K562 (cell line): ENCODE measurements at regions of chr11 and their contacts with region 1.

Region 1: GRCh38 chr11:120335908-120336640 is at the start of gene ARHGEF12:
- DNase-seq: peak; percentile 93 to 97 (median 95)
- ATAC-seq: peak; percentile 61
- H3K4me3 ChIP-seq: peak within 1 kb of the TSS; percentile 72
- H3K27ac ChIP-seq: peak within 1 kb of the TSS; percentile 84
- H3K4me1 ChIP-seq: peaks cover 13 to 20% of the 10 kb centered on the region in 2 experiments; a peak in 3 of 5 replicates
- H3K27me3 ChIP-seq: no peaks in the 10 kb centered on the region
- CTCF ChIP-seq: peak; percentile 43 to 76 (median 54)
- EP300 ChIP-seq: peak; percentile 53
- POLR2A ChIP-seq: peak; percentile 68
- RAD21 ChIP-seq: peak; percentile 19 to 26; a peak in 3 of 4 replicates
- polyA plus RNA-seq, gene ARHGEF12: 3.5 to 4.6 TPM

Region 2: DNA sequence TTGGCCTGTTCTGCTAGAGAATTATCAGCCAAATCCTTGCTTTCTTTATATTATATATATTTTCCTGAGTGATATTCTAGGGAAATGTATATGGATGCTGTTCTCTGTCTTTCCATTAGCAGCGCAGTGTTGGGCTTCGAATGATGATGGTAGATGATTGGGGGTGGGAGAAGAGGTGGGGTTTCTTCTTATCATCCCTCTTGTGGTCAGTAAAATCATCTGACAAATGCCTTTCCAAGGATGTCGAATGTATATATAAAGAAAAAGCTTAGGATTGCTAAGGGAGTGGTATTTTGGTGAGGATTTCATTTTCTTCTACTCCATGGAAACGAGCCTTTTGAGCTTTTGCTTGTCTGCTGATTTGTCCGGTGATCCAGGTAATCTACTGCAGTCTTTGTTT is 49.0 kb after region 1 on chr11:
- CTCF ChIA-PET with region 1: no interaction called
- POLR2A ChIA-PET with region 1: no interaction called
- in situ Hi-C with region 1: no loop called
- intact Hi-C with region 1: loop called (anchors 5 kb)
- DNase-seq: peak; percentile 41 to 45 (median 44)
- ATAC-seq: peak; percentile 88
- H3K4me3 ChIP-seq: no peak overlapping the region
- H3K27ac ChIP-seq: no peak overlapping the region
- H3K4me1 ChIP-seq: no peaks in the 10 kb centered on the region
- H3K27me3 ChIP-seq: no peaks in the 10 kb centered on the region
- CTCF ChIP-seq: peak in 2 of 3 experiments; percentile 19 to 29; a peak in 2 of 6 replicates
- EP300 ChIP-seq: no peak
- POLR2A ChIP-seq: no peak
- RAD21 ChIP-seq: no peak

Region 3: GRCh38 chr11:120441592-120441991 is 105.5 kb after region 1 on chr11:
- CTCF ChIA-PET with region 1: no interaction called
- POLR2A ChIA-PET with region 1: interaction called, 6 read pairs
- in situ Hi-C with region 1: no loop called
- intact Hi-C with region 1: loop called (anchors 5 kb)
- DNase-seq: no peak
- ATAC-seq: no peak
- H3K4me3 ChIP-seq: no peak overlapping the region
- H3K27ac ChIP-seq: no peak overlapping the region
- H3K4me1 ChIP-seq: no peaks in the 10 kb centered on the region
- H3K27me3 ChIP-seq: no peaks in the 10 kb centered on the region
- CTCF ChIP-seq: no peak
- EP300 ChIP-seq: no peak
- POLR2A ChIP-seq: no peak
- RAD21 ChIP-seq: no peak

Region 4: DNA sequence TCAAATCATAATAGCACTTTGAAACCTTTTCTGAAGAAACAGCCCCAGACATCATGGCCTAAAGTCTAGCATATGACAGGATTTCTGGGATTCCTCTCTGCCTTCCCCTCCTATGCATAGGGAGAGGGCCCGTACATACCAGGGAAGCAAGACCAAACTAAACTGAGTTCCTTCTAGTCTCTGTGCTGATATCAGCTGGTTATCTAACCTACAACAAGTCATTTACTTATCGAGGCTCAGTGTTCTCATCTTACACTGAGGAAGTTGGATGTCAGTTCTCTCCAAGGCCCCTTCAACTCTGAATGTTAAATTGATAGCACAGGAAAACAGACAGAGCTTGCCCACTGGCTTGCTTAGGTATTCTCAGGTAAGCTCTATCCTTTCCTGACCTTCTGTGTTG is 158.5 kb after region 1 on chr11:
- CTCF ChIA-PET with region 1: no interaction called
- POLR2A ChIA-PET with region 1: no interaction called
- in situ Hi-C with region 1: no loop called
- intact Hi-C with region 1: loop called (anchors 2 kb)
- DNase-seq: peak in 1 of 4 experiments; percentile 5
- ATAC-seq: peak; percentile 70
- H3K4me3 ChIP-seq: no peak overlapping the region
- H3K27ac ChIP-seq: no peak overlapping the region
- H3K4me1 ChIP-seq: peaks cover 0 to 8% of the 10 kb centered on the region in 2 experiments; a peak in 2 of 5 replicates
- H3K27me3 ChIP-seq: peaks cover 0 to 6% of the 10 kb centered on the region in 2 experiments; a peak in 2 of 5 replicates
- CTCF ChIP-seq: no peak
- EP300 ChIP-seq: no peak
- POLR2A ChIP-seq: no peak
- RAD21 ChIP-seq: no peak

Region 5: GRCh38 chr11:120500414-120501071 is 164.5 kb after region 1 on chr11:
- CTCF ChIA-PET with region 1: no interaction called
- POLR2A ChIA-PET with region 1: no interaction called
- in situ Hi-C with region 1: loop called (anchors 5 kb)
- intact Hi-C with region 1: loop called (anchors 2 kb)
- DNase-seq: no peak
- ATAC-seq: no peak
- H3K4me3 ChIP-seq: no peak overlapping the region
- H3K27ac ChIP-seq: no peak overlapping the region
- H3K4me1 ChIP-seq: no peaks in the 10 kb centered on the region; a peak in 1 of 5 replicates
- H3K27me3 ChIP-seq: peaks cover 9 to 25% of the 10 kb centered on the region in 2 experiments; a peak in 4 of 5 replicates
- CTCF ChIP-seq: no peak
- EP300 ChIP-seq: no peak
- POLR2A ChIP-seq: no peak
- RAD21 ChIP-seq: no peak

Region 6: GRCh38 chr11:120682866-120683265 is 346.8 kb after region 1 on chr11:
- CTCF ChIA-PET with region 1: no interaction called
- POLR2A ChIA-PET with region 1: no interaction called
- in situ Hi-C with region 1: no loop called
- intact Hi-C with region 1: loop called (anchors 10 kb)
- DNase-seq: no peak
- ATAC-seq: no peak
- H3K4me3 ChIP-seq: no peak overlapping the region
- H3K27ac ChIP-seq: no peak overlapping the region
- H3K4me1 ChIP-seq: 0 out of 5 replicates have a peak, but pooled peaks cover 0 to 4% of the 10 kb centered on the region in 2 experiments
- H3K27me3 ChIP-seq: peaks cover 0 to 20% of the 10 kb centered on the region in 2 experiments; a peak in 3 of 5 replicates
- CTCF ChIP-seq: no peak
- EP300 ChIP-seq: no peak
- POLR2A ChIP-seq: no peak
- RAD21 ChIP-seq: no peak